A673 (cell line): ENCODE measurements at regions of chr12 and their contacts with region 1.

Region 1: GRCh38 chr12:98698603-98699463 is 53.7 kb downstream of the APAF1 start:
- DNase-seq: peak; percentile 66
- H3K4me3 ChIP-seq: no peak overlapping the region
- H3K27ac ChIP-seq: no peak overlapping the region
- H3K4me1 ChIP-seq: peaks cover 4% of the 10 kb centered on the region
- H3K27me3 ChIP-seq: no peaks in the 10 kb centered on the region
- CTCF ChIP-seq: peak; percentile 75

Region 2: DNA sequence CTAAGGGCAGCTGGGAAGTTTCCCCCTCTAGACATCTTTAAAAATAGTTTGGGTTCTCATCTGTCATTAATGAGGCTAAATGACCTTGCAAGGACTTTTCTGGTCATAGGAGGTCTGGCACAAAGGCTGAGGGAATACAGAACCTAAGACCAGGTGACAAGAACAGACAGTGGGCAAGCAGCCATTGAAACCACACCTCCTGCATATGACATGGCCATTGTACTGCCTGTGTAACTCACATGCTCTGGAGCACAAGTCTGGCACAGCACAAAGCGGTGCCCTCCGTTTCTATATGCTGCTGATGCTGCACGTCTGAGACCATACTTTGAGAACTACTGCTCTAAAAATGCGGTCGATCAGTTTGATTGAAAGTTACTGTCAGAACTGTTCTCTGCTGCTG is 89.6 kb after region 1 on chr12:
- CTCF ChIA-PET with region 1: no interaction called
- POLR2A ChIA-PET with region 1: no interaction called
- intact Hi-C with region 1: no loop called
- DNase-seq: no peak
- H3K4me3 ChIP-seq: no peak overlapping the region
- H3K27ac ChIP-seq: no peak overlapping the region
- H3K4me1 ChIP-seq: no peaks in the 10 kb centered on the region
- H3K27me3 ChIP-seq: no peaks in the 10 kb centered on the region
- CTCF ChIP-seq: no peak

Region 3: GRCh38 chr12:98998697-98999299 is 300.0 kb after region 1 on chr12:
- CTCF ChIA-PET with region 1: interaction called, 7 read pairs
- POLR2A ChIA-PET with region 1: no interaction called
- intact Hi-C with region 1: loop called (anchors 1 kb)
- DNase-seq: peak; percentile 71
- H3K4me3 ChIP-seq: no peak overlapping the region
- H3K27ac ChIP-seq: no peak overlapping the region
- H3K4me1 ChIP-seq: peaks cover 6% of the 10 kb centered on the region
- H3K27me3 ChIP-seq: no peaks in the 10 kb centered on the region
- CTCF ChIP-seq: peak; percentile 76

Region 4: DNA sequence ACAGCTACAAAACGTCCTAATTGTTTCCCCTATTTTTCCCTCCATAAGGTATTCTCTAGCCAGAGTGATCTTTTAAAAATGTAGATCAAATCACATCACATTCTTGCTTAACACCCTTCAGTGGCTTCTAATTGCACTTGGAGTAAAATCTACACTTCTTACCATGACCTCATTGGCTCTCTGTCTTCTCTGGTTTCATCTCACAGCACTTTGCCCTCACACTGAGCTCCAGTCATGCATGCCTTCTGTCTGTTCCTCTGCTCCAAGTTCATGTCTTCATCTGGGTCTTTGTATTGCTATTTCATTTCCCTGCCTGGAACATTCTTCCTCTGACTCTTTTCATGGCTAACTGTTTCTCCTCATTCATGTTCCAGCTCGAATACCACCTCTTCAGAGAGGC is 728.3 kb after region 1 on chr12:
- CTCF ChIA-PET with region 1: no interaction called
- POLR2A ChIA-PET with region 1: no interaction called
- intact Hi-C with region 1: no loop called
- DNase-seq: no peak
- H3K4me3 ChIP-seq: no peak overlapping the region
- H3K27ac ChIP-seq: no peak overlapping the region
- H3K4me1 ChIP-seq: no peaks in the 10 kb centered on the region
- H3K27me3 ChIP-seq: no peaks in the 10 kb centered on the region
- CTCF ChIP-seq: no peak